ENCODE measurements at regions of chr14 and their contacts with region 1.

Region 1: DNA sequence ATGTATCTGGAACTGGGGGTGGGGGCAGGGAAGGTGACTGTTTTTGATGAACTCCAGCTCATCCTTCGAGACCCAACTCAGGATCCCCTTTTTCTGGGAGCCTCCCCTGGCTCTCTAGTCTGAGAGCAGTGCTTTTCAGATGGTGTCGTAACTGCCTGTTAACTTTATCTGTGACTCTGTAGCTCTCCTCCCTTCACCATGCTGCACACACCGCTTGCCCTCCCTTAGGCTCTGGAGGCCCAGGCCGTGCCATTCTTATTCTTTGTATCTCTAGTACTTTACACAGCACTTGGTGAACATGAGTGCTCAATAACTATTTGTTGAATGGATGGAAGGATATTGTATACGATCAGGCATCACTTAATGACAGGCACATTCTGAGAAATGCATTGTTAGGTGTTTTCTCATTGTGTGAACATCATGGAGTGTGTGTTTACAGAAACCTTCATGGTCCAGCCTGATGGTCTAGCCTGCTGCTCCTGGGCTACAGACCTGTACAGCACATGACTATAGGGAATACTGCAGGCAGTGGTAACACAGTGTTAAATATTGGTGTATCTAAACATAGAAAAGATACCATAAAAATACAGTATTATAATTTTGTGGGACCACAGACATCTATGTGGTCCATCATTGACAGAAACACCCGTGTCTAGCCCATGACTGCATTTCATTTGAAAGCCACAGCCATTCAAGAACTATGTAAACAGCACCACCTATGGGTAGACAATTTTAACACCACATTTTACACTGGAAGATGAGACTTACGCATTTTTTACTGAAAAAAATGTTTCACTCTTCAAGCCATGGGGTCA is 91.8 kb downstream of the EML1 start:
- ATAC-seq: peak; percentile 68 to 91 (median 76)
- H3K4me3 ChIP-seq: no peak overlapping the region
- H3K27ac ChIP-seq: no peak overlapping the region
- H3K4me1 ChIP-seq: peaks cover 13 to 16% of the 10 kb centered on the region in 2 donors

Region 2: GRCh38 chr14:99683619-99684355 is 201.3 kb before region 1 on chr14 and contains the start of gene CYP46A1:
- in situ Hi-C with region 1: loop called in 5 of 9 experiments (anchors 10 to 25 kb)
- ATAC-seq: peak; percentile 84 to 92 (median 88)
- H3K4me3 ChIP-seq: peak within 1 kb of the TSS; percentile 73 to 90 (median 76)
- H3K27ac ChIP-seq: peak within 1 kb of the TSS; percentile 60 to 77
- H3K4me1 ChIP-seq: peaks cover 0 to 4% of the 10 kb centered on the region in 2 donors
- total RNA-seq, gene CYP46A1: 1.7 to 12.3 (median 3.7) TPM

Region 3: DNA sequence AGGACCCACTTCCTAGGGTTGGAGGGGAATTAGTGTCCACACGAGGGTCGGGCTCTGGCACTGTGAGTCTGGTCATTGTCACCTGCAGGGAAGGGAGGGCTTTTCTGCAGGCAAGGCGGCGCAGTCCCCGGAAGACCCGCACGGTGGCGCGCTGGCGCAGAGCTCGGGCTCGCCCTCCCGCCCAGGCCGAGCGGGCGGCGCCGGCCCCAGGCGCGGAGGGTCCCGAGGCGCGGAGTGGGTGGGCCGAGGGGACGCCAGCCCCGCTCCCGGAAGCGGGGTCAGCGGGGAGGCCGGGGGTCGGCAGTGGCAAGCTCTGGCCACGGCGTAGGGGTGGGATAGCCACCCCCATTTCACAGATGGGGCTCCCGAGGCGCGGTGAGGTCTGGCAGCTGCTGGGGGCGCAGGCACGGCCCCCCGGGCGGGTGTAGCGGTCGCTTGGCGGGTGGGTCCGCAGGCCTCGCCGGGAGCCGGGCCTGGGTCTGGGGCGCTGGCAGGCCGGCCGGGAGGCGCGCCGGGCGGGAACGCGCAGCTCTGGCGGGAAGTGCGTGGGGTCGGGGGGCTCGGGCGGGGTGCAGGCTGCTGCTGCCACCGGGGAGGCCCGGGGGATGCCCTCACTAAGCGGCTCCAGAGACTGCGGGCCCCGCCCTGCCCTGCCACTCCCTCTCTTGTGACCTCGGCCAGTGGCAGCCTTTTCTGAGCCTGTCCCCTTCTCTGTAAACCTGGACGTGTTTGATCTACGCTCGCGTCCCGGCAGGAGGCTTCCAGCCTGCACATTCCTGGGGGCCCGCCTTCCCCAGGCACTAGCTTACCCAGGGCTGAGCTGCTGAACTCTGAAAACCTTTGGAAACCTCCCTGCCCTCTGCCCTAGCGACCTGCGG is 154.8 kb before region 1 on chr14:
- in situ Hi-C with region 1: loop called in 3 of 9 experiments (anchors 25 kb)
- ATAC-seq: peak; percentile 48 to 84 (median 80)
- H3K4me3 ChIP-seq: peak overlapping the region; percentile 28 to 49 (median 43)
- H3K27ac ChIP-seq: peak overlapping the region in 1 of 2 donors; percentile 33
- H3K4me1 ChIP-seq: peaks cover 3 to 8% of the 10 kb centered on the region in 2 donors

Region 4: DNA sequence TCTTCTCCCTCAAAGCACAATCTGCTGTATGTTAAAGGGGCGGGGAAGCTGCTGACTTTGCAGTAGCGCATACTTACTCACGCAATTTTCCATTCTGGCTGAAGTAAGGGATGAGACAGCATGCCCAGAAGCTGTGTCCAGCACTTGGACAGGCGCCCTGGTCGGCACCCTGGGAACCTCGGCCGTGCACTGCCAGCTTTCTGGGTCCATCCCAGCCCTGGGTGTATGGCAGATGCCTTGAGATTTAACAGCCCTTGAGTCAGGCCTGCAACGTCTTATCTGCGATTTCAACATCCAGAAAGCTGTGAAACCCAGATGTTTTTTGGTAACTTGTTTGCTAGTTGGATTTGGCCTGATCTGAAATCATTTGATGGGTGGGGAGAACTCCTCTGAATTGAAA is 75.7 kb before region 1 on chr14:
- in situ Hi-C with region 1: loop called in 1 of 9 experiments (anchors 10 kb)
- ATAC-seq: peak in 4 of 8 experiments; percentile 14 to 58 (median 43)
- H3K4me3 ChIP-seq: no peak overlapping the region
- H3K27ac ChIP-seq: no peak overlapping the region
- H3K4me1 ChIP-seq: peaks cover 9 to 14% of the 10 kb centered on the region in 2 donors

Region 5: DNA sequence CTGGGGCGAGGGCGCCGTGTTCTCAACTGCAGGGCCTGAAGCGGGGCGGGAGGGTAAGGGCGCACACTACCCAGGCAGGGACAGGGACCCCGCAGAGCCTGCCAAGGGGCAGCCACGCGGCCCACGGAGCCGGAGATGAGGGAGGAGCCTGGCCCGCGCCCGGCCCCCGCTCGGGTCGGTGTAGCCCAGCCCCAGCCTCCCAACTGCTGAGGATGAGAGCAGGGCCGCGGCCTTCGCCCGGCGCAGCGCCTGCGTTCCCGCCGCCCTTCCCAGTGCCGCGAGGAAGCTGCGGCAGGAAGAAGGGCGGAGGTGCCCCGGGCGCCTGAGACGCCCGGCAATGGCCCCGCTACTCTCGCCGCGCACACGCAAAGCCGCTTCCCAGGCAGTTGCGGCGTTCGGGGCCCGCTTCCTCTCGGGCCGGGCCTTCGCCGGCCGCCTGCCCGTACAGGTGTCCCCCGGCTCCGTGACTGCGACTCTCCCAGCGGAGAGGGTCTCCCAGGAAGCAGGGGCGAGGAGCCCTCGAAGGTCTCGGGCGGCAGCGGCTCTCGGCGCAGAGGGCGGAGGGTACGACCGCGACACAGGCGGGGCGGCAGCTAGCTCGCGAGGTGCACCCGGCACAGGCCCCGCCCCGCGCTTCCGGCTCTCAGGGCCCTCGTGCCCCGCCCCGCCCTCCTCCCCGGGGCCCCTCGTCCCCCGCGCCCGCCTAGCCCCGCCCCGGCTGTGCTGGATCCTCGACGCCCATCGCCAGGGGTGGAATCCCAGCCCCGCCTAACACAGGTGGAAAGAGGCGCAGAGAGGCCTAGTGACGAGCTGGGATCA is 329.1 kb after region 1 on chr14:
- in situ Hi-C with region 1: no loop called
- ATAC-seq: peak; percentile 87 to 95 (median 92)
- H3K4me3 ChIP-seq: peak overlapping the region; percentile 37 to 69 (median 61)
- H3K27ac ChIP-seq: peak overlapping the region; percentile 66 to 89
- H3K4me1 ChIP-seq: peaks cover 8 to 18% of the 10 kb centered on the region in 2 donors